Ascending aorta (tissue), 2 donors: ENCODE measurements at regions of chr7 and their contacts with region 1.

Region 1: DNA sequence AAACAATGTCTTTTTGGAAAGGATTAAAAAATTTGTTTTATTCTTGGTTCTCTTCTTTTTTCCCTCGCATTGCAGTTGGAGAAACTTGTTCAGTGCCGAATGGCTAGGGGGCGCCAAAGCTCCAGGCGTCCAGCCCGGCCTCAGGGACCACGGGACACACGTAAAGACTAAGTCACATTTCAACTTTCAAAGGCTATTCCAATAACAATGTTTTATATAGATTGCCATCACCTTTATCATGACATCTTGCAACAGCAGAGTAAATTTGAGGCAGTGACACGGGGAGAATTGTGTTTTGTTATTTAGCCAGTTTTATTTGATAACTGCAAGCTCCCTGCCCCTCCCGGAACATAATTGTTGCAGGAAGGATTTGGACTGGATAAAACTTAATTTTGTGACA is 2.2 kb upstream of the IGFBP3 start:
- DNase-seq: peak in 1 of 2 donors; percentile 82
- H3K4me3 ChIP-seq: peak overlapping the region; percentile 18 to 85
- H3K27ac ChIP-seq: peak overlapping the region in 1 of 2 donors; percentile 65
- H3K4me1 ChIP-seq: peaks cover 0 to 34% of the 10 kb centered on the region in 2 donors
- H3K27me3 ChIP-seq: no peaks in the 10 kb centered on the region
- CTCF ChIP-seq: peak; percentile 81 to 86 (median 83)

Region 2: DNA sequence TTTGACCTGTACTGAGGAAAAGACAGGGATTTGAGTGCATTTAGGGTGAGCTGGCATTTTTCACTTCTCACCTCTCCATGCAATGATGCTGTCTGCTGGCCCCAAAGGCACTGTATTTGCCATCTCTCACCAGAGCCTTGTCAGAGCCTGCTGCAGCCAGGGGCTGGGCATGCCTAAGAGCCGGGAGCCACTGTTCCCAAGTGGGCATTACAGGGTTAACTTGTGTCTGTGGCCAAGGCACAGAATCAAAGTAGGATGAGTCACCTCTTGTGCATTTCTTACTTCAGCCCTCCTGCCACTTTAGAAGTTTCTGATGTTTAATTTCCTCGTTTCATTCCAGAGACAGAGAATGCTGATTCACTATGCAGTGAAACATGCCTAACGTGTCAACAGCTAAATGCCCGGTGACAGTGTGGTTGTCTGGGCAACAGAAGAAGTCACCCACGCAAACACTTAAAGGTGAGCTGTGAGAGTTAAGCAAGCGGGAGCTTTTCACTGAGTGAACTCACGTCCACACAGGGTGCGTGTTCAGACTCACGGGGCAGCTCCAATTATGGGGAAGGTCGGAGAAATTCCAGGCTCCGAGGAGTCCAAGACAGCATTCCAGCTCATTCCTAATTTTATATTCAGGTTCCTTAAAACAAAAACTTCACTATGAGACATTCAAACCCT is 54.9 kb after region 1 on chr7:
- intact Hi-C with region 1: loop called (anchors 2 kb)
- DNase-seq: peak in 1 of 2 donors; percentile 88
- H3K4me3 ChIP-seq: peak overlapping the region in 1 of 2 donors; percentile 13
- H3K27ac ChIP-seq: peak overlapping the region; percentile 78 to 87
- H3K4me1 ChIP-seq: peaks cover 13 to 31% of the 10 kb centered on the region in 2 donors
- H3K27me3 ChIP-seq: no peaks in the 10 kb centered on the region
- CTCF ChIP-seq: no peak

Region 3: GRCh38 chr7:46139079-46139478 is 215.8 kb after region 1 on chr7:
- intact Hi-C with region 1: no loop called
- DNase-seq: no peak
- H3K4me3 ChIP-seq: no peak overlapping the region
- H3K27ac ChIP-seq: no peak overlapping the region
- H3K4me1 ChIP-seq: peaks cover 0 to 7% of the 10 kb centered on the region in 2 donors
- H3K27me3 ChIP-seq: no peaks in the 10 kb centered on the region
- CTCF ChIP-seq: no peak

Region 4: DNA sequence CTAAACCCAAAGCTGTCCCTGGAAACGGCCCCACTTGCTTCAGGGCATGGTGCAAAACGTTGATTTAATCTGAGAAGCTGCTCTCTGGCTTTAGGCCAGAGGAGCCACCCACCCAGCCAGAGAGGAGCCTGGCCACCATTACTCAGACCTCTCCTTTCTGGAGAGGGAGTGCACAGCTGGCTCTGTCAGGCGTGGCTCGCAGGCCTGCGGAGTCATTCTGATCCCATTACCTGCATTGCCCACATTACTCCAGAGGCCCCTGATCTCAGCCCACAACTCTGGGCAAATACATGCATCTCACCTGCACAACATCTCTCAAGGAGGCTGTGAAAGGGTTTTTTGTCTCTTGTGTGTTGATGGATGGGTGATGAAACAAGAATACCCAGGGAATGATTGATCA is 367.8 kb after region 1 on chr7:
- intact Hi-C with region 1: loop called (anchors 2 kb)
- DNase-seq: no peak
- H3K4me3 ChIP-seq: no peak overlapping the region
- H3K27ac ChIP-seq: peak overlapping the region; percentile 74 to 83
- H3K4me1 ChIP-seq: peaks cover 6 to 11% of the 10 kb centered on the region in 2 donors
- H3K27me3 ChIP-seq: no peaks in the 10 kb centered on the region
- CTCF ChIP-seq: no peak

Region 5: GRCh38 chr7:46414946-46415345 is 491.7 kb after region 1 on chr7:
- intact Hi-C with region 1: no loop called
- DNase-seq: no peak
- H3K4me3 ChIP-seq: no peak overlapping the region
- H3K27ac ChIP-seq: no peak overlapping the region
- H3K4me1 ChIP-seq: no peaks in the 10 kb centered on the region
- H3K27me3 ChIP-seq: no peaks in the 10 kb centered on the region
- CTCF ChIP-seq: no peak

Region 6: GRCh38 chr7:46454816-46455215 is 531.5 kb after region 1 on chr7:
- intact Hi-C with region 1: loop called (anchors 2 kb)
- DNase-seq: no peak
- H3K4me3 ChIP-seq: no peak overlapping the region
- H3K27ac ChIP-seq: no peak overlapping the region
- H3K4me1 ChIP-seq: peaks cover 0 to 3% of the 10 kb centered on the region in 2 donors
- H3K27me3 ChIP-seq: no peaks in the 10 kb centered on the region
- CTCF ChIP-seq: no peak

Region 7: GRCh38 chr7:46752881-46753366 is 829.6 kb after region 1 on chr7:
- intact Hi-C with region 1: loop called (anchors 10 kb)
- DNase-seq: no peak
- H3K4me3 ChIP-seq: no peak overlapping the region
- H3K27ac ChIP-seq: peak overlapping the region; percentile 83 to 84
- H3K4me1 ChIP-seq: peaks cover 9 to 39% of the 10 kb centered on the region in 2 donors
- H3K27me3 ChIP-seq: no peaks in the 10 kb centered on the region
- CTCF ChIP-seq: no peak